ENCODE measurements at regions of chr3 and their contacts with region 1.

Region 1: DNA sequence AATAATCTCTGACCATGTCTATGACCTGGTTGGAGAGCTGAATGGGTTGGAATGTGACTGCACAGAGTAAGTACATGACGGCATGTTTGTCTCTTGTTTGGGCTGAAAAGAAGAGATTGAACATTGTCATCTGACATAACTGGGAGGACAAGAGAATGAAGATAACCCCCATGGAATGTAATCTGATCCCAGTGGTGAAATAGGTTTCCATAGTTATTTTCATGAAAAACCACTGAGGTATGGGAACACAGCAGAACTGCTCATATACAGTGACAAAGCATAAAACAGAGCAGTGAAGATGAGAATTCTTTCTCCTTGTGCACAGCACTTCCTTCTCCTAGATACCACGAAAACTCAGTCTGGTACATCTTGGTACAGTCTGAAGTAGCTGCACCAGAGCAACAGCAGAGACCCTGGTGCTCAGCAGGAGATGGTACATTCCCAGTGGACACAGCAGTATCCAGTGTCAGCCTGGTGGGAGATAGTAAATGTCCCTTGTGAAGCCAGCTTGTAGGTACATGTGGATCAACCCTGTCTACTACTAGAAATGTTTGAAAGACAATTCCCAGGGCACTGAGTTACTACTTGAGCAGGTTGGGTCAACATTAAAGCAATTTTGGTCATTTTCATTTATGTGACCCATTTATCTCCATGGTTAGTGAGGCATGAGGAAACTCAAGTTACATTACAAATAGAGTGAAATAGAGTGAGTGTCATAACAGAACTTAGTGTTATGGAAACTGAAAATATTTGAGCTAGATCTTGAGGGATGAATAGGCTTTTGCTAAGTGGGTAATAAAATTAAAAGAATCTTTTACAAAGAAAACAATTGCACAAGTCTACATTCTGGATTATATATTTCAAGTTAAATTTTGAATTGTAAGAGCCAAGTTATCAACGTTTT is 178.3 kb downstream of the SUCNR1 start:
- DNase-seq: peak; percentile 53 to 63
- H3K4me3 ChIP-seq: no peak overlapping the region
- H3K4me3 Mint-ChIP-seq: peak overlapping the region; percentile 52
- H3K27ac Mint-ChIP-seq: peak overlapping the region; percentile 89
- H3K4me1 ChIP-seq: peaks cover 50% of the 10 kb centered on the region
- H3K4me1 Mint-ChIP-seq: peaks cover 34% of the 10 kb centered on the region
- H3K27me3 ChIP-seq: no peaks in the 10 kb centered on the region
- H3K27me3 Mint-ChIP-seq: no peaks in the 10 kb centered on the region
- CTCF ChIP-seq: no peak

Region 2: GRCh38 chr3:151638555-151639417 is 413.0 kb before region 1 on chr3:
- CTCF ChIA-PET with region 1: no interaction called
- POLR2A ChIA-PET with region 1: interaction called, 11 read pairs
- intact Hi-C with region 1: no loop called
- DNase-seq: peak; percentile 72 to 76
- H3K4me3 ChIP-seq: no peak overlapping the region
- H3K4me3 Mint-ChIP-seq: peak overlapping the region; percentile 14
- H3K27ac Mint-ChIP-seq: peak overlapping the region; percentile 59
- H3K4me1 ChIP-seq: peaks cover 31% of the 10 kb centered on the region
- H3K4me1 Mint-ChIP-seq: peaks cover 21% of the 10 kb centered on the region
- H3K27me3 ChIP-seq: no peaks in the 10 kb centered on the region
- H3K27me3 Mint-ChIP-seq: no peaks in the 10 kb centered on the region
- CTCF ChIP-seq: no peak

Region 3: DNA sequence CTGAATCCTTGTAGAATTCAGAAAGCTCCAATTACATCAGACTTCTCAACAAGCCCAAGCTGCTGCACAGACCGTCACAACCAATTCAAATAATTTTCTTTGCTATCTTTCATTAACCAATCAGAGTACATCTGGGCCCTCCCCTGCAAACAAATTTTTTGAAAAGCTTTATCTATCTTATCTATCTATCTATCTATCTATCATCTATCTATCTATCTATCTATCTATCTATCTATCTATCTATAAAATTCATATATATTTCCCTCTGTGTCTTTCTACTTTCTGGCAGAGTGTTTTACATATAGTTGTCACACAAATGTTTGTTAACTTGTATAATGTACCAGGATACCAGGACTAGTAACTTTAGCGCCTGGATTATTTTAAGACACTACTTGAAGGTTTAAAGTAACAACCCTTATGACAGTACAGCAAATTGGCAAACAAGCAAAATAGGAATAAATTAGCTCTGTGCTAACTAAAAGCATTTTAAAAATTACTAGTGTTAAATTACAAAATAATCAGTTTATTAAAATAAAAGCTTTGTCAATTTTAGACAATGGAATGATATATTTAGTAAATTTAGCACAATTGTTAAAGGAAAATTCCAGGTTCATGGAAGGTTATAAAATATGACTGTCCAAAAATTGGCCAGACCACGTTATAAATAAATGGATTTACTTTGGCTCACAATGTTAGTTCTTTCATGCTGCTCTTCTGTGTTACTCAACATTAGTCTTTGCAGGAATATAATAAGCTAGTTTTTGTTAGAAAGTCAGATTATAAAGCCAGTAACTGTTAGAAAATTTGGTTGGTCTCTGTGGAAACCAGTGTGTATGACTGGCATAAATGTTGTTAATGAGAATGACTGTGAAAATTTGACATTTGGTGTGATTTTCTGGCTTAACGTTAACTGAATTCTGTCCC is 39.7 kb before region 1 on chr3:
- CTCF ChIA-PET with region 1: no interaction called
- POLR2A ChIA-PET with region 1: no interaction called
- intact Hi-C with region 1: no loop called
- DNase-seq: no peak
- H3K4me3 ChIP-seq: no peak overlapping the region
- H3K4me3 Mint-ChIP-seq: no peak overlapping the region
- H3K27ac Mint-ChIP-seq: no peak overlapping the region
- H3K4me1 ChIP-seq: no peaks in the 10 kb centered on the region
- H3K4me1 Mint-ChIP-seq: no peaks in the 10 kb centered on the region
- H3K27me3 ChIP-seq: no peaks in the 10 kb centered on the region
- H3K27me3 Mint-ChIP-seq: no peaks in the 10 kb centered on the region
- CTCF ChIP-seq: no peak

Region 4: GRCh38 chr3:152026033-152026556 is 25.7 kb before region 1 on chr3:
- CTCF ChIA-PET with region 1: no interaction called
- POLR2A ChIA-PET with region 1: no interaction called
- intact Hi-C with region 1: loop called (anchors 1 kb)
- DNase-seq: peak in 1 of 2 experiments; percentile 11
- H3K4me3 ChIP-seq: no peak overlapping the region
- H3K4me3 Mint-ChIP-seq: no peak overlapping the region
- H3K27ac Mint-ChIP-seq: no peak overlapping the region
- H3K4me1 ChIP-seq: no peaks in the 10 kb centered on the region
- H3K4me1 Mint-ChIP-seq: no peaks in the 10 kb centered on the region
- H3K27me3 ChIP-seq: no peaks in the 10 kb centered on the region
- H3K27me3 Mint-ChIP-seq: no peaks in the 10 kb centered on the region
- CTCF ChIP-seq: no peak

Region 5: GRCh38 chr3:152039887-152040286 is 11.9 kb before region 1 on chr3:
- CTCF ChIA-PET with region 1: no interaction called
- POLR2A ChIA-PET with region 1: no interaction called
- intact Hi-C with region 1: loop called (anchors 1 kb)
- DNase-seq: no peak
- H3K4me3 ChIP-seq: no peak overlapping the region
- H3K4me3 Mint-ChIP-seq: no peak overlapping the region
- H3K27ac Mint-ChIP-seq: no peak overlapping the region
- H3K4me1 ChIP-seq: peaks cover 7% of the 10 kb centered on the region; the same call in 1 of the 2 replicates
- H3K4me1 Mint-ChIP-seq: no peaks in the 10 kb centered on the region
- H3K27me3 ChIP-seq: no peaks in the 10 kb centered on the region
- H3K27me3 Mint-ChIP-seq: no peaks in the 10 kb centered on the region
- CTCF ChIP-seq: no peak

Region 6: GRCh38 chr3:152298393-152299242 is 246.9 kb after region 1 on chr3:
- CTCF ChIA-PET with region 1: no interaction called
- POLR2A ChIA-PET with region 1: no interaction called
- intact Hi-C with region 1: no loop called
- DNase-seq: no peak
- H3K4me3 ChIP-seq: no peak overlapping the region
- H3K4me3 Mint-ChIP-seq: no peak overlapping the region
- H3K27ac Mint-ChIP-seq: no peak overlapping the region
- H3K4me1 ChIP-seq: peaks cover 25% of the 10 kb centered on the region
- H3K4me1 Mint-ChIP-seq: peaks cover 16% of the 10 kb centered on the region
- H3K27me3 ChIP-seq: no peaks in the 10 kb centered on the region
- H3K27me3 Mint-ChIP-seq: no peaks in the 10 kb centered on the region
- CTCF ChIP-seq: no peak

Measured in Caco-2 (cell line).